WTC11 (cell line): ENCODE measurements at regions of chrX and their contacts with region 1.

Region 1: DNA sequence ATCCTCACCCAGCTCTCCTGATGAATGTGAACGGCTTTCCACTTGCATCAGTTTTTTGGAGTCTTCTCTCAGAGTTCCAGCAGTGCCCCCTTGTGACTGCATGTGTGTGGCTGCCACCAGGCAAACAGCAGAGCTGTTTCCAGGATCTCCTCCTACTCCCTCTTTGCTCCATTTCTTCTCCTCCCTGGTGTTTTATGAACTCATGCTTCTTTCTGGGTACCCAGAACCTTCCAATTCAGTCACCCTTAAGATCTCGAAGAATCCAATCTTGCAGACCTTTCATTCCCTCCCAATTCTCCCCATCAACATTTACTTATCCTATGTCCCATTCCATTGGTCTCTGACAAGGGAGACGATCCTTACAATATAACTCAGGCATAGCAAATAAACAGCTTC is 6.8 kb upstream of the TCEANC start:
- DNase-seq: peak; percentile 63
- ATAC-seq: peak; percentile 82
- H3K4me3 Mint-ChIP-seq: no peak overlapping the region
- H3K27ac Mint-ChIP-seq: no peak overlapping the region
- H3K4me1 Mint-ChIP-seq: peaks cover 7% of the 10 kb centered on the region
- H3K27me3 Mint-ChIP-seq: no peaks in the 10 kb centered on the region
- CTCF ChIP-seq: no peak; the same call in 1 of the 2 replicates

Region 2: GRCh38 chrX:13506574-13506973 is 139.6 kb before region 1 on chrX:
- CTCF ChIA-PET with region 1: interaction called, 54 read pairs
- POLR2A ChIA-PET with region 1: no interaction called
- DNase-seq: peak; percentile 31
- ATAC-seq: no peak
- H3K4me3 Mint-ChIP-seq: no peak overlapping the region
- H3K27ac Mint-ChIP-seq: no peak overlapping the region
- H3K4me1 Mint-ChIP-seq: no peaks in the 10 kb centered on the region
- H3K27me3 Mint-ChIP-seq: no peaks in the 10 kb centered on the region
- CTCF ChIP-seq: peak; percentile 38

Region 3: DNA sequence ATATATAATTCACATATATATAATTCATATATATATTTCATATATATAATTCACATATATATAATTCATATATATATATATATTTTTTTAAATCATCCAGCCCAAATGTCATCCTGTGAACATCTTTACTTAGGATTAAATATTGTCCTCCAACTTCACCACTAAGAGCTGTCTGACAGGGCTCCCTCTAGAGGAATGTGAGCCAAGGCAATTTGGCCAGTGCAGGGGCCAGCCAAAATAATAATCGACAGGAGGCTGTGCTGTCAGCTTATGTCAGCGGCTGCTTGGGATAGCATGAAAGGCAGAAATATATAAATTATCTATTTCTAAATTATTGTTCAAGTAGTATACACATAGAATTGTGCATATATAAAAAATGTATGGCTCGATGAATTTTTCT is 47.3 kb before region 1 on chrX:
- CTCF ChIA-PET with region 1: interaction called, 10 read pairs
- POLR2A ChIA-PET with region 1: no interaction called
- DNase-seq: peak; percentile 11
- ATAC-seq: peak; percentile 46; the same call in 1 of the 2 replicates
- H3K4me3 Mint-ChIP-seq: no peak overlapping the region
- H3K27ac Mint-ChIP-seq: no peak overlapping the region
- H3K4me1 Mint-ChIP-seq: no peaks in the 10 kb centered on the region
- H3K27me3 Mint-ChIP-seq: no peaks in the 10 kb centered on the region
- CTCF ChIP-seq: no peak

Region 4: DNA sequence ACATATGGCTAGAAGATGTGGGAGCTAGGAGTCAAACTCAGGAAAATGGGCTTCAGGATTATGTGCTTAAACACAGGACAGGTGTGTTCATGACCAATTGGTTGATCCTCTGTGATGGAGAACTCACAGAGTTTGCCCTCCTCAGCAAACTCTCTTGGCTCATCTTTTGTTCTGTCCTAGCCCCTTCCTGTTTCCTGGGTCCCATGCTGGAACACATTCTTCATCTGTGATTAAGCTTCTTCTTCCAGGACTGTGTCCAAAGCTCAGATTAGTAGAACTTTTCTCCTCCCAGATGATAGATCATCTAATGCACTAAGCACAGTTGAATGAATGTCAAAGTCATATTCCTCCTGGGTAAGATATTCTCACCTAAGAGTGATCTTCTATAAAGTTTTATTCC is 32.0 kb before region 1 on chrX:
- CTCF ChIA-PET with region 1: no interaction called
- POLR2A ChIA-PET with region 1: no interaction called
- DNase-seq: no peak
- ATAC-seq: no peak
- H3K4me3 Mint-ChIP-seq: no peak overlapping the region
- H3K27ac Mint-ChIP-seq: no peak overlapping the region
- H3K4me1 Mint-ChIP-seq: 0 out of 2 replicates have a peak, but pooled peaks cover 3% of the 10 kb centered on the region
- H3K27me3 Mint-ChIP-seq: peaks cover 8% of the 10 kb centered on the region
- CTCF ChIP-seq: no peak